Common myeloid progenitor, CD34-positive (primary cell): ENCODE measurements at regions of chr3 and their contacts with region 1.

Region 1: GRCh38 chr3:69092030-69092516 is 7.3 kb downstream of the ARL6IP5 start:
- DNase-seq: peak; percentile 69 to 95 (median 89)
- H3K4me3 ChIP-seq: peak overlapping the region in 6 of 7 experiments; percentile 35 to 63 (median 48)
- H3K27ac ChIP-seq: peak overlapping the region; percentile 71 to 88
- H3K4me1 ChIP-seq: peaks cover 80 to 99% (median 91%) of the 10 kb centered on the region in 4 experiments
- H3K27me3 ChIP-seq: no peaks in the 10 kb centered on the region

Region 2: GRCh38 chr3:69104996-69105719 is 13.1 kb after region 1 on chr3:
- CTCF ChIA-PET with region 1: interaction called, 27 read pairs
- POLR2A ChIA-PET with region 1: interaction called, 4 read pairs
- DNase-seq: peak in 2 of 3 donors; percentile 41 to 56
- H3K4me3 ChIP-seq: peak overlapping the region in 2 of 7 experiments; percentile 19 to 45
- H3K27ac ChIP-seq: peak overlapping the region in 1 of 2 experiments; percentile 62
- H3K4me1 ChIP-seq: peaks cover 13 to 49% (median 20%) of the 10 kb centered on the region in 4 experiments
- H3K27me3 ChIP-seq: no peaks in the 10 kb centered on the region

Region 3: GRCh38 chr3:70072180-70072579 is 980.1 kb after region 1 on chr3:
- CTCF ChIA-PET with region 1: no interaction called
- POLR2A ChIA-PET with region 1: no interaction called
- DNase-seq: peak in 1 of 3 donors; percentile 5
- H3K4me3 ChIP-seq: no peak overlapping the region
- H3K27ac ChIP-seq: no peak overlapping the region
- H3K4me1 ChIP-seq: no peaks in the 10 kb centered on the region
- H3K27me3 ChIP-seq: peaks cover 11 to 80% (median 26%) of the 10 kb centered on the region in 5 experiments